ENCODE measurements at regions of chrX and their contacts with region 1.

Region 1: GRCh38 chrX:71622576-71623450 is 4.5 kb upstream of the CXCR3 start:
- DNase-seq: peak; percentile 83
- ATAC-seq: peak; percentile 53
- H3K4me3 Mint-ChIP-seq: peak overlapping the region; percentile 49
- H3K27ac Mint-ChIP-seq: peak overlapping the region; percentile 94
- H3K4me1 Mint-ChIP-seq: peaks cover 56% of the 10 kb centered on the region
- H3K27me3 Mint-ChIP-seq: no peaks in the 10 kb centered on the region

Region 2: DNA sequence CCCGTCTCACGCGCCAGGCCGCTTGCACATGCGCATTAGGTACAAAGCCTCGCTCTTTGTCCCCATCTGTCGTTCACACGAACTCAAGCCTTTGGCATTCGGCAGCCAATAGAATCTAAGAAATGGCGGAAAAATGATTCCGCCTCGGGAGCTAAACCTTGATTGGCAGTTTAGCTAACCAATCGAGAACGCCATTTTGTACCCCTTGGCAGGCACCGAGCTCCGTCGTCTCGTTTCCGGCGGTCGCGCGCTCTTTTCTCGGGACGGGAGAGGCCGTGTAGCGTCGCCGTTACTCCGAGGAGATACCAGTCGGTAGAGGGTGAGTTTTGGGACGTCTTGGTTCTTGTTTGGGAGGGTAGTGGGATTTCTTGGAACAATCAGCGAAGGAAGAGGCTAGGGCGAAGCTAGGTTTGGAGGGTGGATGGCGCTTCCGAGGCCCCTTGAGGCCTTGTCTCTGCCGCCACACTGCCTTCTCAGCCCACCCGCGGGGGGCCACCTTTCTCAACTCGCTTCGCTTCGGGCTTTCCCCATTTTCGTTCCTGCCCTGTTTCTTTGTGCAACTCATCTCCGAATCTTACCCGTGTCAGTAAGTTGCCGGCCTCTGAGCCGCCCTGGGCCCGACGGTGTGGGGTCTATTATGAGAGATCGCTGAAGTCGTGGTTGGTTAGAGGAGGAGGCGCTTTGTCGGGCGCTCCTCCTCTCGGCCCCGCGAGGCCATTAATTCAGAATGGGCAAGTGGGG is 339.2 kb before region 1 on chrX and contains the start of gene NONO:
- CTCF ChIA-PET with region 1: no interaction called
- POLR2A ChIA-PET with region 1: interaction called, 3 read pairs
- intact Hi-C with region 1: loop called in 1 of 2 experiments (anchors 5 kb)
- DNase-seq: peak; percentile 90
- ATAC-seq: peak; percentile 80
- H3K4me3 Mint-ChIP-seq: peak within 1 kb of the TSS; percentile 92
- H3K27ac Mint-ChIP-seq: peak within 1 kb of the TSS; percentile 98
- H3K4me1 Mint-ChIP-seq: peaks cover 9% of the 10 kb centered on the region
- H3K27me3 Mint-ChIP-seq: no peaks in the 10 kb centered on the region
- total RNA-seq, gene NONO: 508 to 1,161 TPM

Region 3: GRCh38 chrX:71541210-71542022 is 81.4 kb before region 1 on chrX:
- CTCF ChIA-PET with region 1: no interaction called
- POLR2A ChIA-PET with region 1: interaction called, 43 read pairs
- intact Hi-C with region 1: loop called (anchors 1 to 2 kb)
- DNase-seq: peak; percentile 49
- ATAC-seq: peak; percentile 60
- H3K4me3 Mint-ChIP-seq: peak overlapping the region; percentile 96
- H3K27ac Mint-ChIP-seq: peak overlapping the region; percentile 98
- H3K4me1 Mint-ChIP-seq: peaks cover 54% of the 10 kb centered on the region
- H3K27me3 Mint-ChIP-seq: no peaks in the 10 kb centered on the region

Region 4: DNA sequence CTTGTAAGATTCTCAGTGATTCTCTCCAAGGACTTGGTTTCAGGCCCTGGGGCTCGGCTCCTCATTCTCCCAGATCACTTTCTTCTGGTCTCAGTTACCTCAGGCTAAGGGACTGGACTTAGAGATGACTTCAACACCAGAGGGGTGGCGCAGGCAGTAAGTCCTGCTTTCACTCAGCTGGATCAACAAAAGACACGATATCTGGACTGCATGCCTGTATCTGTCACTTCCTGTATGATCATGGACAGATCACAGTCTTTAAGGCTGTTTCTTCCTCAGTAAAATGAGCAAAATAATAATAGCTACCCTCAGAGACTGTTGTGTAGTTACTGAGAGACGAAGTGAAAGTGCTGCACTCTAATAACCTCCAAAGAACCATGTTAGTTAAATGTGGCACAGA is 15.0 kb after region 1 on chrX:
- CTCF ChIA-PET with region 1: interaction called, 6 read pairs
- POLR2A ChIA-PET with region 1: interaction called, 4 read pairs
- intact Hi-C with region 1: loop called (anchors 1 kb)
- DNase-seq: no peak
- ATAC-seq: peak; percentile 34
- H3K4me3 Mint-ChIP-seq: no peak overlapping the region
- H3K27ac Mint-ChIP-seq: no peak overlapping the region
- H3K4me1 Mint-ChIP-seq: no peaks in the 10 kb centered on the region
- H3K27me3 Mint-ChIP-seq: no peaks in the 10 kb centered on the region

Region 5: GRCh38 chrX:71661919-71662318 is 39.1 kb after region 1 on chrX:
- CTCF ChIA-PET with region 1: no interaction called
- POLR2A ChIA-PET with region 1: no interaction called
- intact Hi-C with region 1: loop called in 1 of 2 experiments (anchors 2 kb)
- DNase-seq: no peak
- ATAC-seq: no peak
- H3K4me3 Mint-ChIP-seq: no peak overlapping the region
- H3K27ac Mint-ChIP-seq: no peak overlapping the region
- H3K4me1 Mint-ChIP-seq: peaks cover 31% of the 10 kb centered on the region
- H3K27me3 Mint-ChIP-seq: no peaks in the 10 kb centered on the region

Measured in activated CD4-positive, alpha-beta T cell treated with anti-CD3 and anti-CD28 coated beads for 36 hours (primary cell).